CD8-positive, alpha-beta T cell (primary cell): ENCODE measurements at regions of chr1 and their contacts with region 1.

Region 1: GRCh38 chr1:21294266-21294989 is 4.2 kb upstream of the ECE1 start:
- DNase-seq: peak; percentile 71 to 97 (median 85)
- ATAC-seq: peak; percentile 72
- H3K4me3 ChIP-seq: peak overlapping the region; percentile 44 to 86
- H3K4me3 Mint-ChIP-seq: peak overlapping the region; percentile 86
- H3K27ac ChIP-seq: peak overlapping the region; percentile 91 to 94
- H3K27ac Mint-ChIP-seq: peak overlapping the region; percentile 98
- H3K4me1 ChIP-seq: peaks cover 80% of the 10 kb centered on the region
- H3K4me1 Mint-ChIP-seq: peaks cover 82% of the 10 kb centered on the region
- H3K27me3 ChIP-seq: no peaks in the 10 kb centered on the region
- H3K27me3 Mint-ChIP-seq: no peaks in the 10 kb centered on the region
- CTCF ChIP-seq: no peak

Region 2: DNA sequence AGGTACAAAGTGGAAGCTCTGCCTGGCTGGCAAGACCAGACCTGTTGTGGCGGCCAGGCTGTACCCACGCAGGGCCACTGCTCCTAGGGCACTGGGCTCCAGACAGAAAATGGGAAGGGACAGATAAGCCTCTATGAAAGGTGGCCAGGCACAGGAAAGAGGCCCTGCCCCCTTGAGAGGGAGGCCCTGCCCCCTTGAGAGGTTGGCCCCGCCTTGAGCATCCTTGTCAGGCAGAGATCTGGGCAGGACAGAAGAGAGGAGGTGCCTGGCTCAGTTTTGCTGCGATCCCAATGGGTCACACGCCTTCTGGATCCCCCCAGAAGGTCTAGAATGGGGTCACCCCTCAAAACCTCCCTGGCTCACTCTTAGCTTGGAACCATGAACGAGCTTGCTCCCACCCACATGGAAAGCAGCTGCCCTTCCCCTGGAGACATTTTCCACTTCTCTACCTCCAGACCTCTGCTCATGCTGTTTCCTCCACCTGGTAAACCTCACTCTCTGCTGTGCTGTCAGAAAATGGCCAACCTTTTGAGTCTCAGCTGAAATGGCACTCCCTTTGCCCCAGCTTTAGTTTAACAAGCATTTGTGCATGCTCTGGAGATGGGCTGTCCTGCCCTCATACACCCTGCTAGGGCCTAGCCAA is 13.4 kb after region 1 on chr1:
- CTCF ChIA-PET with region 1: interaction called, 6 read pairs
- POLR2A ChIA-PET with region 1: interaction called, 12 read pairs
- intact Hi-C with region 1: no loop called
- DNase-seq: peak in 1 of 9 experiments; percentile 43
- ATAC-seq: peak; percentile 64
- H3K4me3 ChIP-seq: no peak overlapping the region
- H3K4me3 Mint-ChIP-seq: no peak overlapping the region
- H3K27ac ChIP-seq: peak overlapping the region in 1 of 2 experiments; percentile 38
- H3K27ac Mint-ChIP-seq: peak overlapping the region; percentile 50
- H3K4me1 ChIP-seq: peaks cover 35% of the 10 kb centered on the region
- H3K4me1 Mint-ChIP-seq: peaks cover 50% of the 10 kb centered on the region
- H3K27me3 ChIP-seq: no peaks in the 10 kb centered on the region
- H3K27me3 Mint-ChIP-seq: no peaks in the 10 kb centered on the region
- CTCF ChIP-seq: no peak

Region 3: GRCh38 chr1:21324368-21325141 is 30.1 kb after region 1 on chr1:
- CTCF ChIA-PET with region 1: interaction called, 31 read pairs
- POLR2A ChIA-PET with region 1: interaction called, 62 read pairs
- intact Hi-C with region 1: loop called (anchors 1 kb)
- DNase-seq: peak in 8 of 9 experiments; percentile 26 to 71 (median 64)
- ATAC-seq: peak; percentile 64
- H3K4me3 ChIP-seq: peak overlapping the region in 1 of 2 experiments; percentile 4
- H3K4me3 Mint-ChIP-seq: peak overlapping the region; percentile 76
- H3K27ac ChIP-seq: peak overlapping the region; percentile 13 to 51
- H3K27ac Mint-ChIP-seq: peak overlapping the region; percentile 96
- H3K4me1 ChIP-seq: peaks cover 61% of the 10 kb centered on the region
- H3K4me1 Mint-ChIP-seq: peaks cover 74% of the 10 kb centered on the region
- H3K27me3 ChIP-seq: no peaks in the 10 kb centered on the region
- H3K27me3 Mint-ChIP-seq: no peaks in the 10 kb centered on the region
- CTCF ChIP-seq: no peak

Region 4: GRCh38 chr1:21334214-21335087 is 40.0 kb after region 1 on chr1:
- CTCF ChIA-PET with region 1: interaction called, 33 read pairs
- POLR2A ChIA-PET with region 1: interaction called, 54 read pairs
- intact Hi-C with region 1: loop called (anchors 1 kb)
- DNase-seq: peak; percentile 68 to 94 (median 84)
- ATAC-seq: peak; percentile 86
- H3K4me3 ChIP-seq: peak overlapping the region; percentile 29 to 47
- H3K4me3 Mint-ChIP-seq: peak overlapping the region; percentile 88
- H3K27ac ChIP-seq: peak overlapping the region; percentile 57 to 89
- H3K27ac Mint-ChIP-seq: peak overlapping the region; percentile 98
- H3K4me1 ChIP-seq: peaks cover 84% of the 10 kb centered on the region
- H3K4me1 Mint-ChIP-seq: peaks cover 85% of the 10 kb centered on the region
- H3K27me3 ChIP-seq: no peaks in the 10 kb centered on the region
- H3K27me3 Mint-ChIP-seq: no peaks in the 10 kb centered on the region
- CTCF ChIP-seq: peak; percentile 58